ENCODE measurements at regions of chr1 and their contacts with region 1.

Region 1: GRCh38 chr1:61043010-61043820 is 39.1 kb upstream of the NFIA start:
- DNase-seq: peak; percentile 85 to 90
- H3K4me3 ChIP-seq: peak overlapping the region; percentile 39 to 45
- H3K27ac ChIP-seq: peak overlapping the region; percentile 62 to 67
- H3K4me1 ChIP-seq: peaks cover 0 to 3% of the 10 kb centered on the region in 2 donors
- H3K27me3 ChIP-seq: no peaks in the 10 kb centered on the region
- CTCF ChIP-seq: peak; percentile 82 to 92 (median 89)
- POLR2A ChIP-seq: peak in 1 of 2 donors; percentile 26

Region 2: DNA sequence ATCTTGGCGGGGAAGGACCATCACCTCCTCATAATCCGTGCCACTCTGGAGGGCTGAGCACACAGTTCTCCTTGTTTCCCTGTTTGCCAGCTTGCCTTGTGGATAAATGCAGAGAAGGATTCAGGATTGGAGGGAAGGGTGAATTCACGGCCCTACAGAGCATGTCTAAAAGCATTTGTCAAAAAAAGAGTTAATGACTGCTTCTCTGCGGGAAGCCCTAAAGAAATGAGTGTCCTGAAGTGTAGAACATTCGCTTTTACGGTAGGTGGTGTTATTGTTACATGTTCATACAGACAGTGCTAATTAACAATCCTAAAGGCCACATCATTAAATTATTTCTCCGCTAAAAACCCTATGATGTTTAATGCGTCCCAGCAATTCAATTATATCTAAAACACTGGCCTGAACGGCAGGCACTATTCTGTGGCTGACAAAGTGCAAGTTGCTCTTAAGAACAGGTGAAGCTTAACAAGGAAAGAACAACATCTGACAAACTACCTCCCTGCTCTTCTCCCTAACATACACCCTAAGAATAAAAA is 73.2 kb before region 1 on chr1:
- intact Hi-C with region 1: loop called (anchors 5 kb)
- DNase-seq: no peak
- H3K4me3 ChIP-seq: no peak overlapping the region
- H3K27ac ChIP-seq: no peak overlapping the region
- H3K4me1 ChIP-seq: no peaks in the 10 kb centered on the region
- H3K27me3 ChIP-seq: no peaks in the 10 kb centered on the region
- CTCF ChIP-seq: peak; percentile 52 to 86 (median 62)
- POLR2A ChIP-seq: no peak

Measured in uterus (tissue), 4 donors.